K562 (cell line): ENCODE measurements at regions of chr14 and their contacts with region 1.

Region 1: GRCh38 chr14:76910371-76910890 is 84.2 kb downstream of the LRRC74A start:
- DNase-seq: no peak
- ATAC-seq: no peak
- H3K4me3 ChIP-seq: no peak overlapping the region
- H3K27ac ChIP-seq: no peak overlapping the region
- H3K4me1 ChIP-seq: peaks cover 0 to 6% of the 10 kb centered on the region in 2 experiments; a peak in 1 of 5 replicates
- H3K27me3 ChIP-seq: 0 out of 5 replicates have a peak, but pooled peaks cover 0 to under 1% of the 10 kb centered on the region in 2 experiments
- CTCF ChIP-seq: no peak
- EP300 ChIP-seq: no peak
- POLR2A ChIP-seq: no peak
- RAD21 ChIP-seq: no peak

Region 2: DNA sequence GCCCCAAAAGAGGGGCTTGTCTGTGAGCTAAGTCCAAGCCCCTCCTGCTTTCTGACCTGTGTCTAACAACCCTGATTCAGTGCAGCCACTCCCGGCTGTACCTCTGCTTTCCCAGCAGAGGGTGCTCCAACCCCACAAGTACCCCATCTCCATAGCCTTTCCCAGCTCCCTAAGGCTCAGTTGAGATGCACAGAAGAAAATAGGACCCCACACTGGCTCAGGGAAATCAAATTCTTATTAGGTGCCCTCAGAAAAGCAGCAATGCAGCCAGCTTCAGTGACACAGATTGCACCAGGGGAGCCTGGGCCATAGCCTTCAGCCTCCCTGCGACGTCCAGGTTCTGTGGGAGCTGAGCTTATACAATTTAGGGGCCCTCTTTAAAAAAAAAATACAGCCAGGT is 34.4 kb before region 1 on chr14:
- CTCF ChIA-PET with region 1: interaction called, 4 read pairs
- POLR2A ChIA-PET with region 1: no interaction called
- in situ Hi-C with region 1: no loop called
- intact Hi-C with region 1: loop called (anchors 5 kb)
- DNase-seq: peak; percentile 61 to 68 (median 62)
- ATAC-seq: peak; percentile 91
- H3K4me3 ChIP-seq: no peak overlapping the region
- H3K27ac ChIP-seq: no peak overlapping the region
- H3K4me1 ChIP-seq: no peaks in the 10 kb centered on the region
- H3K27me3 ChIP-seq: peaks cover 0 to 32% of the 10 kb centered on the region in 2 experiments; a peak in 2 of 5 replicates
- CTCF ChIP-seq: peak; percentile 77 to 89 (median 80)
- EP300 ChIP-seq: no peak
- POLR2A ChIP-seq: no peak
- RAD21 ChIP-seq: peak; percentile 92 to 95

Region 3: DNA sequence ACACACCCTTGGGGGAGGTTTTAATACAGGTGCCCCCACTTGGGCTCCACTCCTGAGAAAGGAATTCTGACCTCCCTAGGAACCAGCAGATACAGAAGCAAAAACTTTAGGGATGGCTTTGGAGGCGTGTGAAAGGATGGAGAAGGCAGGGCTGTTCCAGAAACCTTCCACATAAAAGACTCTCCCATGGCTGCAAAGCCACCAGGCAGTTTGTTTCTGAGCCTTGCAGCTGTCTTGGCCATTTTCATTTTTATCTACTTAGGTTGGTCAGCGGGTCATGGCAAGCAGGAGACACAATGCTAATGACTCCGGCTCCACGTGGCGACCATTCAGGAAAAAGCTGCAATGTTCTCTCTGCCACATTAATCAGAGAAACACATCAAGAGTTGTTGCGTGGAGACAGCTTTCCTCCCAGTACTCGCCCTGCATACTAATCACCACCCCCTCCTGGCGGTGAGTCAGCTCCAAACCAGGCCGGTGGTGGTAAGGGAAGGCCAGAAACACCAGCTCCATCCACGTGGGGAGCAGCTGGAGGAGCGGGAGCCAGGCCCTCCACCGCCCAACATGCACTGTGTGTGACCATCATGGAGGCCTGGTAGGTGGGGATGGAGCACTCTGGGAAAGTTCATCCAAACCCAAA is 149.0 kb after region 1 on chr14:
- CTCF ChIA-PET with region 1: interaction called, 28 read pairs
- POLR2A ChIA-PET with region 1: interaction called, 3 read pairs
- in situ Hi-C with region 1: loop called (anchors 5 kb)
- intact Hi-C with region 1: no loop called
- DNase-seq: peak; percentile 75 to 80 (median 77)
- ATAC-seq: peak; percentile 99
- H3K4me3 ChIP-seq: no peak overlapping the region
- H3K27ac ChIP-seq: no peak overlapping the region
- H3K4me1 ChIP-seq: peaks cover 6 to 7% of the 10 kb centered on the region in 2 experiments; a peak in 3 of 5 replicates
- H3K27me3 ChIP-seq: peaks cover 0 to under 1% of the 10 kb centered on the region in 2 experiments; a peak in 1 of 5 replicates
- CTCF ChIP-seq: peak; percentile 56 to 67 (median 61); a peak in 5 of 6 replicates
- EP300 ChIP-seq: no peak
- POLR2A ChIP-seq: no peak
- RAD21 ChIP-seq: peak; percentile 60 to 63